ENCODE measurements at regions of chr22 and their contacts with region 1.

Region 1: GRCh38 chr22:40645579-40646197 is 9.2 kb upstream of the MRTFA start:
- DNase-seq: no peak
- H3K4me3 Mint-ChIP-seq: no peak overlapping the region
- H3K27ac Mint-ChIP-seq: no peak overlapping the region
- H3K4me1 Mint-ChIP-seq: peaks cover 16% of the 10 kb centered on the region
- H3K27me3 Mint-ChIP-seq: no peaks in the 10 kb centered on the region

Region 2: GRCh38 chr22:40443732-40444131 is 202.0 kb before region 1 on chr22:
- CTCF ChIA-PET with region 1: interaction called, 15 read pairs
- DNase-seq: no peak
- H3K4me3 Mint-ChIP-seq: no peak overlapping the region
- H3K27ac Mint-ChIP-seq: no peak overlapping the region
- H3K4me1 Mint-ChIP-seq: peaks cover 38% of the 10 kb centered on the region
- H3K27me3 Mint-ChIP-seq: no peaks in the 10 kb centered on the region

Region 3: DNA sequence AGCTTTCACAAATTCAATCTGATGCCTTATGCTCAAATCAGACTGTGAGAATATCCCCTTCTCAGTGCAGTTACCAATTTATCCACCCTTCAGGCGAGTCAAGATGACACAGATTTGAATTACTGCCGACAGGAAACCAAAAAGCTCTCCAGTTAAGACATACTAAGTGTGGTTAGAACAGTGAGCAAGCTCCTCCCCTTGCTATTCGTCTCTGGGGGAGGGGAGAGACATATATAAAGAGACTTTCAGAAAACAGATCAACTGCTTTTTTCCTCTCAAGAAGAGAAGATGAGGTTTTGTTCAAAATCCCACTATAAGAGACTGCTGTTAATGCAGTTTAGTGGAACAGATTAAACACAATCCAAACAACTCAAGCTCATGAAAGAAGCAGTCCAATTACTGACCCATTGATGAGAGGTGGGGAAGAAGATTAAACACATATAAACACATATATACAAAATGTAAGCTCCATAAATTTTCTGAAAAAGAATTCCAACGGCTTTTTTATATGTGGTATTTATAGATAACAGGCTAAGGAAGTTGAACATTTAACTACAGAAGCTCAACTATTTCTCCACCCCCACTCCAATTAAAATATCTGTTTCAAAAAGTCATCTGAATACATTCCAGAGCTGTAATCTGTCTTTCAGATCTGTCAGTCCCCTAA is 111.8 kb before region 1 on chr22:
- CTCF ChIA-PET with region 1: interaction called, 127 read pairs
- DNase-seq: peak; percentile 73
- H3K4me3 Mint-ChIP-seq: peak overlapping the region; percentile 78
- H3K27ac Mint-ChIP-seq: peak overlapping the region; percentile 80
- H3K4me1 Mint-ChIP-seq: peaks cover 57% of the 10 kb centered on the region
- H3K27me3 Mint-ChIP-seq: no peaks in the 10 kb centered on the region

Region 4: DNA sequence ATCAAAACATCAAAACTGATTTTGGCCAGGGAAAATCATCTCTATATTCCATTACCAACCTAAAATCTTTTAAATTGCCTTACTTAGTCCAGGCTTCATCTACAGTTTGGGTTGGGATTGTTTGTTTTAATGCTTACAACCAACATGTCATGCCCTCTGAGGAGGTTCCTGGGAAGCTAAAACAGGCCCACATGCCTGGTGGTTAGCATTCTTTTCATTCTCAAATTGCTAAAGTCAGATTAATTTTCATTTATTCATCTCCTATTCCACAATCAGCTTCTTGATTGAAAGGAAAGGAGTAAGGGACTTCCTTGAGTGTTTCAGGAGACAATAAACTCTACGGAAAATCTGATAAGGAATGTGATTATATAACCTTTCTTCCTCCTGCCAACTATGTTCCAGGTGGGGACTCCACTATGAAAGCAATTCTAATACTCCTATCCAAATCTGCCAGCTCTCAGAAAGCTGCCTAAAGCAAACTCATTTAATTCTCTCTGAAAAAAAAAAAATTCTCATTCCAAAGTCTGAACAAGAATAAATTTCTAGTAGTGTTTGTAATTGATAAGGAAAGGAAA is 39.9 kb before region 1 on chr22:
- CTCF ChIA-PET with region 1: no interaction called
- DNase-seq: no peak
- H3K4me3 Mint-ChIP-seq: no peak overlapping the region
- H3K27ac Mint-ChIP-seq: no peak overlapping the region
- H3K4me1 Mint-ChIP-seq: peaks cover 10% of the 10 kb centered on the region
- H3K27me3 Mint-ChIP-seq: no peaks in the 10 kb centered on the region

Region 5: DNA sequence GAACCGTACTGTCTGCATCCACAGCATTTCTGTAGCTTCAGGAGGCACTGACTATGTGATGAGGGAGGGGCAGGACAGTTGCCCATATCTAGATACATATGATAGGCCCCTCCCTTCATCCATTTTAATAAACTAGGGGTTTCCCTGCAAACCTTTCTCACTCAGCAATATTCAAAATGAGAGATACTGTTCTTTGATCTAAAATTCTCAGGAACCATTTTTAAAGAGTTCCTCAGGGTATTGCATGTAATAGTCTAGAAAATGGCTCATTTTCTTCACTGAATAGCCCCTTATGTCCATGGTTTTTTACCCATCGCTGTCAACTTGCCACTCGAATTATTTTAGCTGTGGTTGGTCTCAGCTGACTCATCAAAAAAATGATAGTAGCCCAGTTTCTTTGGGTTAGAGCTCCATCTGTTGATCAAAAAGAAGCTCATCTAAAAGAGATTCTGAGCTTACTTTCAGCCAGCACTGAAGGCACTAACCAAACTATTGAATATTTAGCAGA is 253.2 kb after region 1 on chr22:
- CTCF ChIA-PET with region 1: interaction called, 14 read pairs
- DNase-seq: peak; percentile 23
- H3K4me3 Mint-ChIP-seq: no peak overlapping the region
- H3K27ac Mint-ChIP-seq: no peak overlapping the region
- H3K4me1 Mint-ChIP-seq: peaks cover 8% of the 10 kb centered on the region
- H3K27me3 Mint-ChIP-seq: no peaks in the 10 kb centered on the region

Measured in activated naive CD4-positive, alpha-beta T cell treated with anti-CD3 and anti-CD28 coated beads, Interleukin-2, amount 10 ng/mL, durations not matched to agents 7 days and 5 days (primary cell).